ENCODE measurements at regions of chr11 and their contacts with region 1.

Region 1: GRCh38 chr11:18526521-18527296 is at the start of gene TSG101:
- DNase-seq: peak; percentile 96 to 97
- H3K4me3 ChIP-seq: peak within 1 kb of the TSS; percentile 60
- H3K4me3 Mint-ChIP-seq: peak within 1 kb of the TSS; percentile 91
- H3K27ac Mint-ChIP-seq: peak within 1 kb of the TSS; percentile 96
- H3K4me1 ChIP-seq: no peaks in the 10 kb centered on the region
- H3K4me1 Mint-ChIP-seq: no peaks in the 10 kb centered on the region
- H3K27me3 ChIP-seq: no peaks in the 10 kb centered on the region
- H3K27me3 Mint-ChIP-seq: no peaks in the 10 kb centered on the region
- CTCF ChIP-seq: no peak
- total RNA-seq, gene TSG101: 64.6 and 86.6 TPM in 2 replicates

Region 2: GRCh38 chr11:18243783-18244362 is 282.8 kb before region 1 on chr11:
- CTCF ChIA-PET with region 1: no interaction called
- POLR2A ChIA-PET with region 1: no interaction called
- intact Hi-C with region 1: loop called (anchors 10 kb)
- DNase-seq: peak; percentile 67 to 81
- H3K4me3 ChIP-seq: no peak overlapping the region
- H3K4me3 Mint-ChIP-seq: no peak overlapping the region
- H3K27ac Mint-ChIP-seq: no peak overlapping the region
- H3K4me1 ChIP-seq: no peaks in the 10 kb centered on the region
- H3K4me1 Mint-ChIP-seq: no peaks in the 10 kb centered on the region
- H3K27me3 ChIP-seq: no peaks in the 10 kb centered on the region
- H3K27me3 Mint-ChIP-seq: peaks cover 9% of the 10 kb centered on the region
- CTCF ChIP-seq: peak; percentile 85 to 89

Region 3: DNA sequence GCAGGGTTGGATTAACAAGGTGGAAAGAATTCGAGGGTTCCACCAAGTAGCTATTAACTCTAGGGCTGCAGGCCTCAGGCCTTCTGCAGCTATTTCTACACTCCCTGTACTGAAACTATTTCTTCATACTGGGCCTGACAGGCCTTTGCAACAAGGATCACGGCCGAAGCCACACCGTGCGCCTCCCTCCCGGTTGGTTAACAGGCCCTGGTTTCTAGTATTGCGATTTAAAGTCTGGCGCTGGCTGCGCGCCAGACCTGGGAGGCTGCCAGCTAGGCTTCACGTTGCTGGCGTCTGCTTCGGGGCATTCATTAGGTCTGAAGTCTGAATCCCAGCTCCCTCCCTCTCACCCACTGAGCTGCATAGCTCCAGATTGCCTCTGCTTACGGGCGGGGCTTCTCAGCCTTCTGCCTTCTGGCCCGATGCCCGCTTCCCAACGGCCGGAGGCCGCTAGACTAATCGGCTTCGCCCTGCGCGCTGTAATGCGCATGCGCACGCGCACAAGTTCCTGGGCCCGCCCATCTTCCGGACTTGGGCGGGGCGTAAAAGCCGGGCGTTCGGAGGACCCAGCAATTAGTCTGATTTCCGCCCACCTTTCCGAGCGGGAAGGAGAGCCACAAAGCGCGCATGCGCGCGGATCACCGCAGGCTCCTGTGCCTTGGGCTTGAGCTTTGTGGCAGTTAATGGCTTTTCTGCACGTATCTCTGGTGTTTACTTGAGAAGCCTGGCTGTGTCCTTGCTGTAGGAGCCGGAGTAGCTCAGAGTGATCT is 130.8 kb before region 1 on chr11:
- CTCF ChIA-PET with region 1: no interaction called
- POLR2A ChIA-PET with region 1: interaction called, 28 read pairs
- intact Hi-C with region 1: loop called (anchors 2 kb)
- DNase-seq: peak; percentile 97 to 98
- H3K4me3 ChIP-seq: peak overlapping the region; percentile 96
- H3K4me3 Mint-ChIP-seq: peak overlapping the region; percentile 98
- H3K27ac Mint-ChIP-seq: peak overlapping the region; percentile 98
- H3K4me1 ChIP-seq: no peaks in the 10 kb centered on the region; the same call in 1 of the 2 replicates
- H3K4me1 Mint-ChIP-seq: no peaks in the 10 kb centered on the region
- H3K27me3 ChIP-seq: no peaks in the 10 kb centered on the region
- H3K27me3 Mint-ChIP-seq: no peaks in the 10 kb centered on the region
- CTCF ChIP-seq: no peak

Region 4: GRCh38 chr11:18578975-18579598 is 52.4 kb after region 1 on chr11:
- CTCF ChIA-PET with region 1: interaction called, 5 read pairs
- POLR2A ChIA-PET with region 1: interaction called, 17 read pairs
- intact Hi-C with region 1: no loop called
- DNase-seq: peak; percentile 88
- H3K4me3 ChIP-seq: 0 out of 2 replicates have a peak overlapping the region, but pooled peaks have one; percentile 8
- H3K4me3 Mint-ChIP-seq: peak overlapping the region; percentile 36
- H3K27ac Mint-ChIP-seq: peak overlapping the region; percentile 69
- H3K4me1 ChIP-seq: peaks cover 17% of the 10 kb centered on the region
- H3K4me1 Mint-ChIP-seq: no peaks in the 10 kb centered on the region
- H3K27me3 ChIP-seq: no peaks in the 10 kb centered on the region
- H3K27me3 Mint-ChIP-seq: no peaks in the 10 kb centered on the region
- CTCF ChIP-seq: no peak

Region 5: DNA sequence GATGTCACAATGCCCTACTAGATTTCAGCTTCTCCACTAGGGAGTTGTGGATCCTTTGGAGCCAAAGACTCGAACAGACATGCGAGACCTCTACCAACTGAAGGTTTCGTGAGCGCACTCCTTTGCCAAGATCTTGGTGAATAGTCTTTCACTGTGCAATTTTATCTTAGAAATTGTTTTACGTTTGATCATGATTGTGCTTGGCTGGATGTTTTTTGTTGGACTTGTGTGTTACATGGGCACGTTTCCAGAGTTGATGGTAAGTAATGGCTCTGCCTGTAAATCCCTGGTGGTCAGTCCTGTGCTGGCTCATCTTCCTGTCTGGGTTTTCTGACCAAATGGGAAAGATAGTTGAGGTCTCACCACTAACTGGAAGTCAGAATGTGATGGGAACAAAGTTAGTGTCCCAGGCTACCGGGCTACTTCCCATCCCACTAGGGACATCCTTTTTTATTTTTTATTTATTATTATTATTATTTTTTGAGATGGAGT is 73.1 kb after region 1 on chr11 and contains the start of gene MISFA:
- CTCF ChIA-PET with region 1: no interaction called
- POLR2A ChIA-PET with region 1: no interaction called
- intact Hi-C with region 1: no loop called
- DNase-seq: no peak
- H3K4me3 ChIP-seq: no peak within 1 kb of the TSS
- H3K4me3 Mint-ChIP-seq: no peak within 1 kb of the TSS
- H3K27ac Mint-ChIP-seq: no peak within 1 kb of the TSS
- H3K4me1 ChIP-seq: no peaks in the 10 kb centered on the region
- H3K4me1 Mint-ChIP-seq: no peaks in the 10 kb centered on the region
- H3K27me3 ChIP-seq: no peaks in the 10 kb centered on the region
- H3K27me3 Mint-ChIP-seq: no peaks in the 10 kb centered on the region
- CTCF ChIP-seq: no peak
- total RNA-seq, gene MISFA: 5.2 and 8.8 TPM in 2 replicates

Region 6: GRCh38 chr11:18634140-18635032 is 107.7 kb after region 1 on chr11 and contains the start of gene SPTY2D1:
- CTCF ChIA-PET with region 1: no interaction called
- POLR2A ChIA-PET with region 1: interaction called, 15 read pairs
- intact Hi-C with region 1: loop called (anchors 2 kb)
- DNase-seq: peak; percentile 98 to 99
- H3K4me3 ChIP-seq: peak within 1 kb of the TSS; percentile 67
- H3K4me3 Mint-ChIP-seq: peak within 1 kb of the TSS; percentile 89
- H3K27ac Mint-ChIP-seq: peak within 1 kb of the TSS; percentile 98
- H3K4me1 ChIP-seq: peaks cover 2% of the 10 kb centered on the region; the same call in 1 of the 2 replicates
- H3K4me1 Mint-ChIP-seq: no peaks in the 10 kb centered on the region
- H3K27me3 ChIP-seq: no peaks in the 10 kb centered on the region
- H3K27me3 Mint-ChIP-seq: peaks cover 4% of the 10 kb centered on the region
- CTCF ChIP-seq: no peak
- total RNA-seq, gene SPTY2D1: 21.4 and 24.6 TPM in 2 replicates

Region 7: GRCh38 chr11:18865261-18865660 is 338.6 kb after region 1 on chr11:
- CTCF ChIA-PET with region 1: no interaction called
- POLR2A ChIA-PET with region 1: no interaction called
- intact Hi-C with region 1: no loop called
- DNase-seq: no peak
- H3K4me3 ChIP-seq: no peak overlapping the region
- H3K4me3 Mint-ChIP-seq: no peak overlapping the region
- H3K27ac Mint-ChIP-seq: no peak overlapping the region
- H3K4me1 ChIP-seq: peaks cover 12% of the 10 kb centered on the region; the same call in 1 of the 2 replicates
- H3K4me1 Mint-ChIP-seq: peaks cover 6% of the 10 kb centered on the region
- H3K27me3 ChIP-seq: no peaks in the 10 kb centered on the region
- H3K27me3 Mint-ChIP-seq: no peaks in the 10 kb centered on the region
- CTCF ChIP-seq: no peak